Gastrocnemius medialis (tissue), 4 donors: ENCODE measurements at regions of chr12 and their contacts with region 1.

Region 1: GRCh38 chr12:442235-442884 is 17.4 kb upstream of the B4GALNT3 start:
- DNase-seq: no peak
- ATAC-seq: peak in 1 of 2 donors; percentile 70
- H3K4me3 ChIP-seq: no peak overlapping the region
- H3K27ac ChIP-seq: no peak overlapping the region
- H3K4me1 ChIP-seq: no peaks in the 10 kb centered on the region
- H3K27me3 ChIP-seq: no peaks in the 10 kb centered on the region
- CTCF ChIP-seq: peak; percentile 55 to 84 (median 71)
- POLR2A ChIP-seq: no peak

Region 2: DNA sequence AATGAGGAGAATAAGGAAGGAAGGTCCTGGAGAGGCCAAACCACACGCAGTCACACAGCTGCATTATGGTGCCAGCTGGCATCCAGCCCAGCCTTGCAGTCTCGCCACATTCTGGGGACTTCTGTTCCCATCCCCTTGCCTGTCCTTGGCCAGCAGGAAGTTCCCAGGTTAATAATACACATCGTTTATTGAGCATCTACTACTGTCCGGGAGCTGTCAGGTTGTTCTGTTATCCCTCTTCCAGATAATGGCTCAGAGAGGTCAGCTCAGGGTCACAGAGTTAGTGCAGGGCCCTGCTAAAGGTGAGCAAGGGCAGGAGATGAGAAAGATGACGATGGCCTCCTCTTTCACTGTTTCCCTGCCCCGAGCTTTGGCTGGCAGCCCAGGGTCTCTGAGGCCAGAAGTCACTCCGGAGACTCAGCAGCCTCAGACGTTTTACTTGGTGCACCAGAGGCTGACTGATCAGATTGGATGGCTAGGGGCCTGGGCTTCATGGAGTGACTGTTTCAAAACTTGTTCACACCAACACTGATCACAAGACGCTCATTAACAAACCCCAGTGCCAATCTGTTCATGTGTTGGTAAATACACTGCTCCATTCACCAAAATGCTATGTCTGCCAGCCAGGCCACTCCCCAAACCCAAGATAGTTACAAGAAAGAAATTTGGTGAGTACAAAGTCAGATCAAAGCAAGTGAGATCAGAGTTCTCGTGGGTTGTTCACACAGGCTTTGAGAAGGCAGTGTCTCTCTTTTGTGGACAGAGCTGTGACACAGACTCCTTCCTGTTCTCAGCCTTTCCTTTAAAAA is 96.6 kb after region 1 on chr12:
- in situ Hi-C with region 1: loop called (anchors 5 to 10 kb)
- intact Hi-C with region 1: no loop called
- DNase-seq: no peak
- ATAC-seq: no peak
- H3K4me3 ChIP-seq: no peak overlapping the region
- H3K27ac ChIP-seq: no peak overlapping the region
- H3K4me1 ChIP-seq: no peaks in the 10 kb centered on the region
- H3K27me3 ChIP-seq: no peaks in the 10 kb centered on the region
- CTCF ChIP-seq: no peak
- POLR2A ChIP-seq: no peak

Region 3: DNA sequence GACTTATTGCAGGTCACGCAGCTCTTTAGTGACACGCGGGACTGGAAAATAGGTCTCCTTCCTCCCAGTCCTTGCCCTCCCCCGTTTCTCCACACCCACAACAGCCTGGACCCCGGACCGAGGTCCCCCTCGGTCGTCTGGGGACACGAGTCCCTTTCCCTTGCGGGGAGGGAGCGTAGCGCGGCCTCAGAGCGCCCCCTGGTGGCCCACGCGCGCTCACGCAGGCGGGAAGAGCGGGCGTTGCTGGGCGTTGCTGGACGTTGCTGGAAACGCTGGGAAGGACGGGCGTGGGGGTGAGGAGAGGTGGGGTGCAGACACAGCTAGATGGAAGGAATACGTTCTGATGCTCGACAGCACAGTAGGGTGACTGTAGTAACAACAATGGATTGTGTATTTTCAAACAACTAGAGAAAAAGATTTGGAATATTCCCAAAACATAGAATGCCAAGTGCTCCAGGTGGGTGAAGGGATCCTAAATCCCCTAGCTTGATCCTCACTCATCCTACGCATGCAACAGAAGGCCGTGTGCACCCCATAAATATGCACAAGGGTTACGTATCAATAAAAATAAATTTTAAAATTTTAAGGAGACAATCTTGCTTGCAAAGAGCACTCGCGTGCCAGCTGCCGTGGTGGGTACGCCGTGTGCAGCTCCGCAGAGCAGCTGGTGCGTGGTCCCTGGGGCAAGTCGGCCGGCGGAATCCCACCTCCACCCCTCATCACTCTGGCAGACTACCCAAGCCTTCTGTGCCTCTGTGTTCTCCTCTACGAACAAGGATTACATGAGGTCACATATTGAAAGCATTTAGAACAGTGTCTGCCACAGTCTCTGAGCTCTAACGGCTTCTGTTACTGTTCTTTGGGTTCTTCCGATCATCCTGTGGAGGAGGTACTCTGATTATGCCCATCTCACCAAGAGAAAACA is 104.8 kb after region 1 on chr12:
- in situ Hi-C with region 1: loop called in 3 of 4 experiments (anchors 5 kb)
- intact Hi-C with region 1: loop called (anchors 1 kb)
- DNase-seq: no peak
- ATAC-seq: peak; percentile 40 to 68
- H3K4me3 ChIP-seq: peak overlapping the region in 1 of 4 donors; percentile 2
- H3K27ac ChIP-seq: no peak overlapping the region
- H3K4me1 ChIP-seq: peaks cover 0 to 10% of the 10 kb centered on the region in 2 donors
- H3K27me3 ChIP-seq: peaks cover 0 to 6% (median 5%) of the 10 kb centered on the region in 3 donors
- CTCF ChIP-seq: peak; percentile 98 to 99 (median 99)
- POLR2A ChIP-seq: no peak